ENCODE measurements at regions of chr3 and their contacts with region 1.

Region 1: GRCh38 chr3:148943506-148944205 is 47.7 kb upstream of the GYG1 start:
- DNase-seq: peak; percentile 70 to 77 (median 76)
- ATAC-seq: peak; percentile 98
- H3K4me3 ChIP-seq: no peak overlapping the region
- H3K27ac ChIP-seq: no peak overlapping the region
- H3K4me1 ChIP-seq: peaks cover 0 to 4% of the 10 kb centered on the region in 2 experiments; a peak in 2 of 5 replicates
- H3K27me3 ChIP-seq: peaks cover 0 to 5% of the 10 kb centered on the region in 2 experiments; a peak in 2 of 5 replicates
- CTCF ChIP-seq: peak; percentile 64 to 86 (median 75)
- EP300 ChIP-seq: peak; percentile 17; the same call in 1 of the 2 replicates
- POLR2A ChIP-seq: no peak
- RAD21 ChIP-seq: peak; percentile 69 to 85

Region 2: GRCh38 chr3:147383617-147384016 is 1560.0 kb before region 1 on chr3:
- CTCF ChIA-PET with region 1: no interaction called
- POLR2A ChIA-PET with region 1: no interaction called
- in situ Hi-C with region 1: loop called (anchors 25 kb)
- intact Hi-C with region 1: loop called (anchors 10 kb)
- DNase-seq: peak in 1 of 4 experiments; percentile 9
- ATAC-seq: peak; percentile 81
- H3K4me3 ChIP-seq: no peak overlapping the region
- H3K27ac ChIP-seq: no peak overlapping the region
- H3K4me1 ChIP-seq: no peaks in the 10 kb centered on the region
- H3K27me3 ChIP-seq: peaks cover 0 to 22% of the 10 kb centered on the region in 2 experiments; a peak in 2 of 5 replicates
- CTCF ChIP-seq: peak in 2 of 3 experiments; percentile 26 to 49; a peak in 2 of 6 replicates
- EP300 ChIP-seq: no peak
- POLR2A ChIP-seq: no peak
- RAD21 ChIP-seq: no peak

Region 3: GRCh38 chr3:147391781-147392624 is 1551.7 kb before region 1 on chr3:
- CTCF ChIA-PET with region 1: no interaction called
- POLR2A ChIA-PET with region 1: no interaction called
- in situ Hi-C with region 1: loop called (anchors 25 kb)
- intact Hi-C with region 1: loop called (anchors 10 kb)
- DNase-seq: no peak
- ATAC-seq: no peak; the same call in 2 of the 3 replicates
- H3K4me3 ChIP-seq: no peak overlapping the region
- H3K27ac ChIP-seq: no peak overlapping the region
- H3K4me1 ChIP-seq: peaks cover 0 to 25% of the 10 kb centered on the region in 2 experiments; a peak in 2 of 5 replicates
- H3K27me3 ChIP-seq: peaks cover 7 to 64% of the 10 kb centered on the region in 2 experiments; a peak in 4 of 5 replicates
- CTCF ChIP-seq: no peak
- EP300 ChIP-seq: no peak
- POLR2A ChIP-seq: no peak
- RAD21 ChIP-seq: no peak

Region 4: GRCh38 chr3:148309390-148310035 is 634.1 kb before region 1 on chr3:
- CTCF ChIA-PET with region 1: no interaction called
- POLR2A ChIA-PET with region 1: no interaction called
- in situ Hi-C with region 1: no loop called
- intact Hi-C with region 1: loop called (anchors 10 kb)
- DNase-seq: peak in 3 of 4 experiments; percentile 6 to 22 (median 7)
- ATAC-seq: 0 out of 3 replicates have a peak, but pooled peaks have one; percentile 47
- H3K4me3 ChIP-seq: no peak overlapping the region
- H3K27ac ChIP-seq: no peak overlapping the region
- H3K4me1 ChIP-seq: no peaks in the 10 kb centered on the region
- H3K27me3 ChIP-seq: no peaks in the 10 kb centered on the region
- CTCF ChIP-seq: peak in 1 of 3 experiments; percentile 21; a peak in 1 of 6 replicates
- EP300 ChIP-seq: no peak
- POLR2A ChIP-seq: no peak
- RAD21 ChIP-seq: 0 out of 4 replicates have a peak, but pooled peaks of 1 of the 2 experiments have one; percentile 16

Region 5: DNA sequence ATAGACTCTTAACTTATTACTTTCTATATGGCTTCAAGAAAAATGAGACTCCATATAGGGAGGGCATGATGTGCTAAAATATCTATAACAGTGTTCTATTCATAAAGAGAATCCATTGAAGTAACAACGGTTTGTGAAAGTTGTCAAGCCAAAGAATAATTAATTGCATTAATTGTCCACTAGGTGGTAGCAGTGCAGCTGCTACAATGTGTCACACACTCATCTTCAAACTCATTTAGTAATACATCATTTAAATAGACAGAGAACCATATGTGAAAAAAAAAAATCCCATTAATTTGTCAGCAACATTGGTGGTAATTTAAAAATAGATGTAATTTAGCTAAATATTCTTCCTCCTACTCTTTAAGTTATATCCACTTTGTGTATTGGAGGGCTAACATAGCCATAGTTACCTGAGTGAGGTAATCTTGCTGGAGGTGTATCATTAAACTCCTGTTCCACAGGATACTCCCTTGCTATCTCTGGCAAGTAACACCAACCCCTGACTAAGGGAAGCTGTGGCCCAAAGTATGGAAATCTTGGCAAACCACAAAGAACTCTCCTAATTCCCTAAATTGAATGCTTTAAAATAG is 82.3 kb before region 1 on chr3:
- CTCF ChIA-PET with region 1: interaction called, 13 read pairs
- POLR2A ChIA-PET with region 1: no interaction called
- in situ Hi-C with region 1: no loop called
- intact Hi-C with region 1: loop called (anchors 1 kb)
- DNase-seq: peak; percentile 31 to 52 (median 50)
- ATAC-seq: peak; percentile 69
- H3K4me3 ChIP-seq: no peak overlapping the region
- H3K27ac ChIP-seq: no peak overlapping the region
- H3K4me1 ChIP-seq: no peaks in the 10 kb centered on the region
- H3K27me3 ChIP-seq: no peaks in the 10 kb centered on the region
- CTCF ChIP-seq: peak in 2 of 3 experiments; percentile 40 to 68; a peak in 4 of 6 replicates
- EP300 ChIP-seq: no peak
- POLR2A ChIP-seq: no peak
- RAD21 ChIP-seq: peak; percentile 65 to 70

Measured in K562 (cell line).